PC-3 (cell line): ENCODE measurements at regions of chr12 and their contacts with region 1.

Region 1: GRCh38 chr12:26402648-26403047 is 207.3 kb downstream of the SSPN start:
- DNase-seq: peak; percentile 100
- ATAC-seq: peak; percentile 98
- H3K4me3 ChIP-seq: peak overlapping the region; percentile 24
- H3K27ac ChIP-seq: peak overlapping the region; percentile 91
- H3K4me1 ChIP-seq: peaks cover 31% of the 10 kb centered on the region
- H3K27me3 ChIP-seq: no peaks in the 10 kb centered on the region
- CTCF ChIP-seq: peak; percentile 46

Region 2: GRCh38 chr12:26359576-26359975 is 43.1 kb before region 1 on chr12:
- CTCF ChIA-PET with region 1: no interaction called
- POLR2A ChIA-PET with region 1: no interaction called
- intact Hi-C with region 1: no loop called
- DNase-seq: no peak
- ATAC-seq: no peak
- H3K4me3 ChIP-seq: no peak overlapping the region
- H3K27ac ChIP-seq: no peak overlapping the region
- H3K4me1 ChIP-seq: no peaks in the 10 kb centered on the region
- H3K27me3 ChIP-seq: no peaks in the 10 kb centered on the region
- CTCF ChIP-seq: no peak

Region 3: GRCh38 chr12:26369588-26369987 is 33.1 kb before region 1 on chr12:
- CTCF ChIA-PET with region 1: no interaction called
- POLR2A ChIA-PET with region 1: no interaction called
- intact Hi-C with region 1: loop called (anchors 2 kb)
- DNase-seq: peak; percentile 84
- ATAC-seq: peak; percentile 100
- H3K4me3 ChIP-seq: no peak overlapping the region
- H3K27ac ChIP-seq: no peak overlapping the region
- H3K4me1 ChIP-seq: peaks cover 12% of the 10 kb centered on the region
- H3K27me3 ChIP-seq: no peaks in the 10 kb centered on the region
- CTCF ChIP-seq: no peak